ENCODE measurements at regions of chr11 and their contacts with region 1.

Region 1: DNA sequence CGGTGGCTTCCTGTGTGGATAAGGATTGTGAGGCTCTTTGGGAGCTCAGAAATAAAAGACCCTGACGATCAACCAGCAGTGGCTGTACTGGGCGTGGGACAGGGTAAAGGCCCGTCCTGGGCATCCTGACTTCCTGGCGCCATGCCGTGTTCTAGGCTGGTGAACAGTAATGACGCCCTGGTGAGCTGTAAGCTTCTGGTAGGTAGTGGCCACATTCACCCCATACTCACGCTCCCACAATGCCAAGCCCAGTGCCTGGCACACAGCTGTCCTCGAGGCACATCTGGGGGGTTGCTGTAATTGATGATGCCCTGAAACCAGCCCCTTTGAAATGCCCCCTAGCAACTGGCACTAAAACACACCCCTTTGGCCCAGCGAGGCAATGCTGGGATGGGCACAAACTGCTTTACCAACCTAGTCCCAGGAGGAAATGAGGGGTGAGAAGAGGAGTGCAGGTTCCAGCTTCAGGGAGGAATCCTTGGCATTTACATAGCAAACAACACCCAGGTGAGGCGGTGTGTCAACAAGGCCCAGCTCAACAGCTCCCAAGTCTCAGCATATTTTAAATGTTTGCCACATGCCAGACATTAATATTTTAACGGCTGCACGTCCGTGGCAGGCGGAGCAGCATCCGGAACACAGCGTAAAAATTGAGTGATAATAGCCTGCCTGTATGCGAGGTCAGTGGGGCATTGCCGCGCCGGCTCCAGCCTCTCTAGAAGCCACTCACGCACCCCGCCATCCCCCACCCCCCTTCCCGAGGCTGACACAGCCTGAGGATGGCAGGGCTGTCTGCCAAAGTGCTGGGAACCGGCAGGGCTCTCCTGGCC is 79.3 kb downstream of the DSCAML1 start:
- DNase-seq: no peak
- ATAC-seq: peak; percentile 75
- H3K4me3 ChIP-seq: no peak overlapping the region
- H3K27ac ChIP-seq: peak overlapping the region; percentile 74
- H3K4me1 ChIP-seq: peaks cover 25% of the 10 kb centered on the region
- H3K27me3 ChIP-seq: no peaks in the 10 kb centered on the region
- CTCF ChIP-seq: no peak

Region 2: DNA sequence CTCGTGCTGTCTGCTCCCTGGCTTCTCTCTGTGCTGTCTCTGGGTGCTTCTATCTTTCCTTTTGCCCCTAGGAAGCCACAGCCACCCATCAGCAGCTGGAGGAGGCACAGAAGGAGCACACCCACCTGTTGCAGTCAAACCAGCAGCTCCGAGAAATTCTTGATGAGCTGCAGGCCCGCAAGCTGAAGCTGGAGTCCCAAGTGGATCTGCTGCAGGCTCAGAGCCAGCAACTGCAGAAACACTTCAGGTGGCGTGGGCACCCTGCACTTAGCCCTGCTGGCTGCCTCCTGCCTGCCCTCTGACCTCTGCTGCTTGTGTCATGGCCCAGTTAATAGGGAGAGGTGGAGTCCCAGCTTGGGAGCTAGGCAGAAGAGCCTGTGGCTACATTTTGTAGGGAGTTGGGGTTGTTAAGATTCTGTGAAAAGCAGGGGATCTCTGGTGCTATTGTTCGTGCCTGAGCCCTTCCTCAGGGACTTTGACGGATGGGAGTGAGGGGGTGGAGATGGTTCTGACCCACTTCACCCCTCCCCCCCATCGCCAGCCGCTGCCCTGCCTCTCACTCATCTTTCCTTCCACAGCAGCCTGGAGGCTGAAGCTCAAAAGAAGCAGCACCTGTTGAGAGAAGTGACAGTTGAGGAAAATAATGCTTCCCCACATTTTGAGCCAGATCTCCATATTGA is 322.1 kb before region 1 on chr11:
- CTCF ChIA-PET with region 1: no interaction called
- POLR2A ChIA-PET with region 1: interaction called, 11 read pairs
- in situ Hi-C with region 1: no loop called
- intact Hi-C with region 1: no loop called
- DNase-seq: no peak
- ATAC-seq: no peak
- H3K4me3 ChIP-seq: no peak overlapping the region
- H3K27ac ChIP-seq: no peak overlapping the region
- H3K4me1 ChIP-seq: no peaks in the 10 kb centered on the region
- H3K27me3 ChIP-seq: no peaks in the 10 kb centered on the region
- CTCF ChIP-seq: no peak